Left ventricle myocardium inferior (tissue), 1 donor: ENCODE measurements at regions of chr9 and their contacts with region 1.

Region 1: GRCh38 chr9:119968836-119969707 is 599.8 kb upstream of the BRINP1 start:
- DNase-seq: peak; percentile 67
- H3K4me3 ChIP-seq: no peak overlapping the region
- H3K27ac ChIP-seq: no peak overlapping the region
- H3K4me1 ChIP-seq: peaks cover 5% of the 10 kb centered on the region
- H3K27me3 ChIP-seq: peaks cover 57% of the 10 kb centered on the region
- CTCF ChIP-seq: peak; percentile 94

Region 2: GRCh38 chr9:119556129-119556875 is 412.8 kb before region 1 on chr9:
- intact Hi-C with region 1: loop called (anchors 5 kb)
- DNase-seq: peak; percentile 66
- H3K4me3 ChIP-seq: peak overlapping the region; percentile 54
- H3K27ac ChIP-seq: no peak overlapping the region
- H3K4me1 ChIP-seq: peaks cover 9% of the 10 kb centered on the region
- H3K27me3 ChIP-seq: peaks cover 34% of the 10 kb centered on the region
- CTCF ChIP-seq: peak; percentile 96

Region 3: GRCh38 chr9:120161736-120162135 is 192.7 kb after region 1 on chr9:
- intact Hi-C with region 1: no loop called
- DNase-seq: no peak
- H3K4me3 ChIP-seq: no peak overlapping the region
- H3K27ac ChIP-seq: no peak overlapping the region
- H3K4me1 ChIP-seq: no peaks in the 10 kb centered on the region
- H3K27me3 ChIP-seq: no peaks in the 10 kb centered on the region
- CTCF ChIP-seq: no peak